ENCODE measurements at regions of chr11 and their contacts with region 1.

Region 1: GRCh38 chr11:125270711-125271110 is 106.2 kb downstream of the PKNOX2 start:
- DNase-seq: no peak
- ATAC-seq: no peak
- H3K4me3 ChIP-seq: no peak overlapping the region
- H3K4me3 Mint-ChIP-seq: no peak overlapping the region
- H3K27ac ChIP-seq: no peak overlapping the region
- H3K27ac Mint-ChIP-seq: no peak overlapping the region
- H3K4me1 ChIP-seq: no peaks in the 10 kb centered on the region
- H3K4me1 Mint-ChIP-seq: no peaks in the 10 kb centered on the region
- H3K27me3 ChIP-seq: peaks cover 0 to 2% of the 10 kb centered on the region in 2 experiments
- H3K27me3 Mint-ChIP-seq: peaks cover 48% of the 10 kb centered on the region
- CTCF ChIP-seq: no peak

Region 2: GRCh38 chr11:125253795-125254525 is 16.8 kb before region 1 on chr11:
- CTCF ChIA-PET with region 1: no interaction called
- POLR2A ChIA-PET with region 1: no interaction called
- intact Hi-C with region 1: no loop called
- DNase-seq: no peak
- ATAC-seq: no peak
- H3K4me3 ChIP-seq: no peak overlapping the region
- H3K4me3 Mint-ChIP-seq: no peak overlapping the region
- H3K27ac ChIP-seq: no peak overlapping the region
- H3K27ac Mint-ChIP-seq: no peak overlapping the region
- H3K4me1 ChIP-seq: no peaks in the 10 kb centered on the region
- H3K4me1 Mint-ChIP-seq: no peaks in the 10 kb centered on the region
- H3K27me3 ChIP-seq: no peaks in the 10 kb centered on the region
- H3K27me3 Mint-ChIP-seq: peaks cover 18% of the 10 kb centered on the region
- CTCF ChIP-seq: no peak

Region 3: GRCh38 chr11:125300791-125301218 is 30.1 kb after region 1 on chr11:
- CTCF ChIA-PET with region 1: no interaction called
- POLR2A ChIA-PET with region 1: no interaction called
- intact Hi-C with region 1: loop called in 1 of 2 experiments (anchors 1 kb)
- DNase-seq: no peak
- ATAC-seq: no peak
- H3K4me3 ChIP-seq: no peak overlapping the region
- H3K4me3 Mint-ChIP-seq: no peak overlapping the region
- H3K27ac ChIP-seq: no peak overlapping the region
- H3K27ac Mint-ChIP-seq: no peak overlapping the region
- H3K4me1 ChIP-seq: no peaks in the 10 kb centered on the region
- H3K4me1 Mint-ChIP-seq: no peaks in the 10 kb centered on the region
- H3K27me3 ChIP-seq: peaks cover 0 to 2% of the 10 kb centered on the region in 2 experiments
- H3K27me3 Mint-ChIP-seq: peaks cover 6% of the 10 kb centered on the region
- CTCF ChIP-seq: no peak

Measured in CD4-positive, alpha-beta T cell (primary cell).